Head of caudate nucleus (tissue), 42 donors: ENCODE measurements at regions of chr20 and their contacts with region 1.

Region 1: GRCh38 chr20:33097001-33097400 is 17.6 kb downstream of the BPIFB4 start:
- DNase-seq: peak in 2 of 42 donors; percentile 9 to 15

Region 2: DNA sequence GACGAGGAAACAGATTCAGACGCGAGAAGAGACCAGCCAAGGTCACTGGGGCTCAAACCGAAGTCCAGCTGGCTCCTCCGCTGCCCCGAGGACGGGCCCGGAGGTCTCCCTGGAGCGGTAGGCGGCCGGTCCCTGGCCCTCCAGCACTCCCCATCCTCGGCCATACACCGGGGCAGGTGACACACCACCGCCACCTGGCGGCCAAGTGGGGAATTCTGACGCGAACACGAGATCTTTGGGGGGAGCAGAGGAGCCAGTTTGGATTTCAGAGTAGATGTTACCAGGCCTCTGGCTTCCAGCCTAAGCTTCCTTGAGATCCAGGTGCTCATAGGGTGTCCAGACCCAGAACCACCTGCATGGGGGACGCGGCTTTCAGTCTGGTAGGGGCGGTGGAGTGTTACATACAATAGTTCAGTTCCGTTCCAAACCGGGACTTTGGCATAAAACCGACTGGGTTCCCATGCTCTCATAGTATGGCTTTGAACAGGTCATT is 202.2 kb after region 1 on chr20:
- intact Hi-C with region 1: loop called (anchors 10 kb)
- DNase-seq: peak; percentile 18 to 92 (median 77)